Endothelial cell of umbilical vein (primary cell): ENCODE measurements at regions of chr2 and their contacts with region 1.

Region 1: GRCh38 chr2:168705534-168706470 is 96.6 kb upstream of the NOSTRIN start:
- DNase-seq: peak; percentile 29
- H3K4me3 ChIP-seq: no peak overlapping the region
- H3K27ac ChIP-seq: no peak overlapping the region
- H3K4me1 ChIP-seq: no peaks in the 10 kb centered on the region
- H3K27me3 ChIP-seq: no peaks in the 10 kb centered on the region
- CTCF ChIP-seq: peak; percentile 24 to 36
- POLR2A ChIP-seq: no peak

Region 2: DNA sequence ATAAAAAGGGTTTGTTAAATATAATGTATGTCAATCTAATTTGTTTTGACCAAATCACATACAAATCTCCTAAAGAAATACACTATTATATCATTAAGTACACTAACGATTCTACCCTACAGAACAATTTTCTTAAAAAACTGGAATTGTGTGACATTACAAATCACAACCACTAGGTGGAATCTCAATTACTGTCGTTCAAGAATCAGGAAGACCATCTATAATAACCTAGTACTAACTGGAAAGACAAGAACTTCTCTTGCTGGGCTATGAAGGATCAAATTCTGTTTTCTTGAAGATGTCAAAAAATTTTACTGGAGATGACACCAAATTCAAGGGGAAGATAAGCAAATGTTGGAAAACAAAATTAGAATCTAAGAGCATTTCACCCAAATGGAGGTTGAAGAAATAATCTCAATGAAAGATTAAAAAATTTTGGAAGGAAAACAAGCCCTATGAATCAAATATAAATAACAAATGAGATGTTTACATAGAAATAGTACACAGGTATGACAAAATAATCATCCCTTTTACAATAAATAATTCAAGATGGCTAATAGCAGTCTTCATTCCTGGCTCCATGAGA is 569.3 kb before region 1 on chr2:
- CTCF ChIA-PET with region 1: no interaction called
- POLR2A ChIA-PET with region 1: no interaction called
- dilution Hi-C with region 1: no loop called
- intact Hi-C with region 1: loop called (anchors 10 kb)
- DNase-seq: peak; percentile 57
- H3K4me3 ChIP-seq: no peak overlapping the region
- H3K27ac ChIP-seq: no peak overlapping the region
- H3K4me1 ChIP-seq: peaks cover 9% of the 10 kb centered on the region
- H3K27me3 ChIP-seq: no peaks in the 10 kb centered on the region
- CTCF ChIP-seq: peak; percentile 19 to 36
- POLR2A ChIP-seq: no peak

Region 3: DNA sequence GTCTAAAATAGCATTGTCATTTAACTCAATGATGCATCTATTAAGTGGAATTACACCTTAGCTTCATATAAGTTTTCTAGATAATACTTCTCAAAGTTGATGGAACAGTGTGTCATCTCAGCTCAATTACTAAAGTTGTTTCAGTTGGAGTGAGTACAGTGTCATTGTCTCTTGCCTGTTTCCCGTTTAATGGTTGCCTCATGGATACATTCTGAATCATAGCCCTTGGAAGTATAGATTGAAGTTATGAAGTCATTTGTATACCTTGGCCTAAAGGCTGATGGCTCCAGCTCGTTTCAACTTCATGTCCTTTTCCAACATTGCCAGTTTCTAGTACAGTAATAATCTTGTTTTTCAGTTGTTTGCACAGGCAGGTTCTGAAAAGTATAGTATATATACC is 33.9 kb before region 1 on chr2:
- CTCF ChIA-PET with region 1: no interaction called
- POLR2A ChIA-PET with region 1: no interaction called
- dilution Hi-C with region 1: no loop called
- intact Hi-C with region 1: no loop called
- DNase-seq: peak; percentile 48
- H3K4me3 ChIP-seq: no peak overlapping the region
- H3K27ac ChIP-seq: no peak overlapping the region
- H3K4me1 ChIP-seq: no peaks in the 10 kb centered on the region
- H3K27me3 ChIP-seq: no peaks in the 10 kb centered on the region
- CTCF ChIP-seq: no peak
- POLR2A ChIP-seq: no peak

Region 4: DNA sequence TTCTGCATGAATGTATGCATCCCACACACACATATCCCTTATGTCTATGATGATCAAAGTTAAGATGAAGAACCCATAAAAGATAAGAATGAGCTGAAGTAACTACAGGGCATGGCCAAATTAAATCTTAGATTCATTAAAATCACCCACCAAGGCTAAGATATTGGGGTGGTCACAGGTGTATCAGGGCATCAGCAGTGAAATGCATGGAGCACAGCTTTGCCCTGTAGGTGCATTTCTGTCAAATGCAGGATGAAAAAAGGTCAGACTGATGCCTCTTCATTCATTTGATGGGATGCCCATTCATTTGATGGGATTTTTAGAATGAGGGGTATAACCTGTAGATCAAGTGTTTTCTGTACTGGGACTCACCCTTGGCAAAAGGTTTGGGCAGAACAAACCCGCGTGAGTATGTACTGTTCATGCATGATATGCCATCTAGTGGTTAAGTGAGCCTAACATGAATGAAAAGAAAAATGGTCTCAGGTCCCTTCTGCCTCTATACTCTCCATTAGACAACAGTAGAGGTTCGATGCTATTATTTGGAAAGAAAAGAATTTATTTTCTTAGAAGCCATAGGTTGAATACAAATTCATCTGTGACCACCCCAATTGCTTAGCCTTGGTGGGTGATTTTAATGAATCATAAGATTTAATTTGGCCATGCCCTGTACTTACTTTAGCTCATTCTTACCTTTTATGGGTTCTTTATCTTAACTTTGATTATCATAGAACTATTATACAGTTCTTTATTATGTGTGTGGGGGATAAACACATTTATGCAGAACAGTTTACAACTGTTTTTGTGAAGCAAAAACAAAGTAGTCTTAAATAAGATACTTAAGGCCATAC is 53.4 kb after region 1 on chr2:
- CTCF ChIA-PET with region 1: interaction called, 4 read pairs
- POLR2A ChIA-PET with region 1: no interaction called
- dilution Hi-C with region 1: no loop called
- intact Hi-C with region 1: loop called (anchors 5 kb)
- DNase-seq: peak; percentile 58
- H3K4me3 ChIP-seq: no peak overlapping the region
- H3K27ac ChIP-seq: no peak overlapping the region
- H3K4me1 ChIP-seq: peaks cover 14% of the 10 kb centered on the region
- H3K27me3 ChIP-seq: no peaks in the 10 kb centered on the region
- CTCF ChIP-seq: peak; percentile 40 to 62
- POLR2A ChIP-seq: no peak